ENCODE measurements at regions of chr12 and their contacts with region 1.

Region 1: DNA sequence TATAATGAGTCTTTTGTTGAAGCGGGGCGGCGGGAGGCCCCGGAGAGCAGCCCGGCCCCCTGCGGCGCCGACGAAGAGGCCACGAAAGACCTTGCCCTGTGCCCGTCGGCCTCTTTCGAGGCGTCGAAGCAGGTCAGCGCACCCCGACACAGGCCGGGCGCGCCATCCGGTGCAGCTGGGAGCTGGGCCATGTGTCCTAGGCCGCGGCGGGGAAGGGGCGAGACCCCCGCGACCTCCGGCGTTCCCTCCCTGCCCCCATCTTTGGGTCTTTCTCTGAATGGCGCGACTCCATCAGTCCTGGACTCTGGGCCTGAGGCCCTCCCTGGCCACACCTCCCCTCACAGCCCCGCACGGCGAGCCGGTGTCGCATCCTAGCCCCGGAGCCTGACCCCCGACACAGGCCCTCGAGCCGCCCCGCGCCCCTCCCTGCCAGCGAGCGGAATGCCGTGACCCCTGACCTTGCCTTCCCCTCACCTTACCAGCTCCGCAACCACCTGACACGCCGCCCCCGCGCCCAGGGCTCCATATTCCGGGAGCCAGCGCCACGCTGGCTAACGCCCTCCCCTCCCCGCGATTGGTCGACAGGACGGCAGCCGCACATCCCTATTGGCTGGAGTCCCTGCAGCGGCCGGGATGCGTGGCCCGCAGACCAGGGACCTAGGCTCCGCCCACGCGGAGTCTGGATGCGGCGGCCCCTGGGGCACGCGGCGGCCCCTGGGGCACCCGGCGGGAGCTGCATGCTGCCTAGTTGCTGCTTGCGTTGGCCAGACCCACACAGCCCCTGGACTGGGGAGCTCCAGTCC is at the start of gene SLC11A2:
- DNase-seq: peak; percentile 94
- ATAC-seq: peak; percentile 96
- H3K4me3 Mint-ChIP-seq: peak within 1 kb of the TSS; percentile 95
- H3K27ac Mint-ChIP-seq: peak within 1 kb of the TSS; percentile 97
- H3K4me1 Mint-ChIP-seq: peaks cover 50% of the 10 kb centered on the region
- H3K27me3 Mint-ChIP-seq: peaks cover 11% of the 10 kb centered on the region
- total RNA-seq, gene SLC11A2: 29.9 to 36.1 TPM

Region 2: DNA sequence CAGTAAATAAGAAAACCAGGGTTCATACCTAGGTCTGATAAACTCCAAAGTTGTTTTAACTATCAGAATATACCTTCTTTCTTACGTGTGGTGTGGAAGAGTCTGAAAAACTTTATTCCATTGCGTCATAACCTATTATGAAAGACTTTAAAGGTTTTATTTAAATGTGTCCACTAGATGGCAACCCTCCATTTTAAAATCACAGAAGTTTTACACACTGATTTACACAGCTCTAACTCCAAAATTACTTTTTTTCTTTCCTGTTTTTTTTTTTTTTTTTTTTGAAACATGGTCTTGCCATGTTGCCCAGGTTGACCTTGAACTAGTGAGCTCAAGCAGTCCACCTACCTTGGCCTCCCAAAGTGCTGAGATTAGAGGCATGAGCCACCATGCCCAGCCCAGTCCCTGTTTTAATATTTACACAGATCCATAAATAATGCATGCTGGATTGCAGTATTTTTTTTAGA is 200.6 kb before region 1 on chr12:
- CTCF ChIA-PET with region 1: interaction called, 43 read pairs
- POLR2A ChIA-PET with region 1: interaction called, 3 read pairs
- DNase-seq: no peak
- ATAC-seq: peak; percentile 73
- H3K4me3 Mint-ChIP-seq: no peak overlapping the region
- H3K27ac Mint-ChIP-seq: peak overlapping the region; percentile 46
- H3K4me1 Mint-ChIP-seq: peaks cover 5% of the 10 kb centered on the region
- H3K27me3 Mint-ChIP-seq: no peaks in the 10 kb centered on the region

Region 3: GRCh38 chr12:50986966-50987737 is 38.9 kb before region 1 on chr12:
- CTCF ChIA-PET with region 1: interaction called, 47 read pairs
- POLR2A ChIA-PET with region 1: interaction called, 4 read pairs
- DNase-seq: peak; percentile 57
- ATAC-seq: peak; percentile 69
- H3K4me3 Mint-ChIP-seq: no peak overlapping the region
- H3K27ac Mint-ChIP-seq: peak overlapping the region; percentile 45
- H3K4me1 Mint-ChIP-seq: peaks cover 12% of the 10 kb centered on the region
- H3K27me3 Mint-ChIP-seq: no peaks in the 10 kb centered on the region

Region 4: GRCh38 chr12:51009056-51009440 is 17.0 kb before region 1 on chr12:
- CTCF ChIA-PET with region 1: interaction called, 19 read pairs
- POLR2A ChIA-PET with region 1: interaction called, 8 read pairs
- DNase-seq: peak; percentile 73
- ATAC-seq: peak; percentile 98
- H3K4me3 Mint-ChIP-seq: peak overlapping the region; percentile 52
- H3K27ac Mint-ChIP-seq: peak overlapping the region; percentile 75
- H3K4me1 Mint-ChIP-seq: peaks cover 19% of the 10 kb centered on the region
- H3K27me3 Mint-ChIP-seq: no peaks in the 10 kb centered on the region

Region 5: DNA sequence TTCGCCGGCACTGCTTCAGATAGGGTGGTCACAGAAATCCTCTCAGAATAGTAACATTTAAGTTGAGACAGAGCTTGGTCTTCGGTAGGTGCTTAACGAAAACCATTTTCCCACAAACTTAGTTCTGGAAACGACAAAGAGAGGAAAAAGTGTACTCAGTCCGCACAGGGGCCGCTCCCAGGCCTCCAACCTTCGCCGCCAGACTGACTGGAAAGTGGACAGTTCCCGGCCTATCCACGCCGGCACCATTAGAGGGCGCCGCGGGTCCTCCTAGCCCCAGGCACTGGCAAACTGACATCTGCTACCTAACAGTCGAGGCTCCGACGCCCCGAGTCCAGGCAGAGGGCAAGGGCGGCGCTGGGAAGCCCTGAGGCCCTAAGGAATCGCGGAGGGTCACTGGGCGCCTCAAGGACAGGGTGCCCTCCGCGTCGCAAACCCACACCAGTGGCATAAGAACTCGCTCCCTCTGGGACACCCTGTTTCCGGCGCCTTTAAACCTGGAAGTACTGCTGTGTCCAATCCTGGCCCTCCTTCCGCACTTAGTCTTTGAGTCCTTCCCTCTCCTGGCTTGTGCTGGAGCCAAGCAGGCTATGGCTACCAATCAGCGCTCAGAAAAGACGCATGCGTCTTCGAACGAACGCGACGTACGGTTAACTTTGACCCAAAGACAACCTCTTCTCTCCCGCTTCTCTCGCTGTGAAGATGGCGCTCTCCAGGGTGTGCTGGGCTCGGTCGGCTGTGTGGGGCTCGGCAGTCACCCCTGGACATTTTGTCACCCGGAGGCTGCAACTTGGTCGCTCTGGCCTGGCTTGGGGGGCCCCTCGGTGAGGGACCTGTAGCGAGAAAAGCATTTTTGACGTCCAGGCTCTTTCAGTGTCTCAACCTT is 21.9 kb after region 1 on chr12 and contains the start of gene LETMD1:
- CTCF ChIA-PET with region 1: interaction called, 7 read pairs
- POLR2A ChIA-PET with region 1: interaction called, 10 read pairs
- DNase-seq: peak; percentile 96
- ATAC-seq: peak; percentile 99
- H3K4me3 Mint-ChIP-seq: peak within 1 kb of the TSS; percentile 88
- H3K27ac Mint-ChIP-seq: peak within 1 kb of the TSS; percentile 87
- H3K4me1 Mint-ChIP-seq: peaks cover 31% of the 10 kb centered on the region
- H3K27me3 Mint-ChIP-seq: no peaks in the 10 kb centered on the region
- total RNA-seq, gene LETMD1: 60.1 to 69.7 TPM

Measured in activated CD8-positive, alpha-beta T cell treated with anti-CD3 and anti-CD28 coated beads, Interleukin-2, amount 10 ng/mL, durations not matched to agents 7 days and 5 days (primary cell).